Left ventricle myocardium superior (tissue), 1 donor: ENCODE measurements at regions of chr16 and their contacts with region 1.

Region 1: GRCh38 chr16:25014500-25015147 is 545 bp downstream of the ARHGAP17 start:
- DNase-seq: peak; percentile 66
- ATAC-seq: peak; percentile 51

Region 2: DNA sequence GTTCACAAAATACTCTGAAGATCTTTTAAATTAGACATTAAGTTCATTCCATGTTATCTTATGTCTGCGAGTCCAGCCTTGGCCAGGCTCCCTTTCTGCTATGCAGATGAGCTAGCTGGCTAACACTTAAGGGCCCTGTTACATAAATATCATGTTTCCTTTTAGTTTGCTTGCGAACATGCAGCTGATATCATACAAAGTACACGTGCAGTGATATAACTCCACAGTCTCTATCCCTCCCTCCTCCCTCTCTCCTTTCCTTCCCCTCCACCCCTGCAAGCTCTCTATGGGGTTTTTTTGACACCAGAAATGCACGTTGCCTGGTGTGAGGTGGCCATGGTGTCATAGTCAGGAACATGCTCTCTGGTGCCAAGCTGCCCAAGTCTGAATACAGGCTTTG is 45.6 kb before region 1 on chr16:
- intact Hi-C with region 1: loop called (anchors 10 kb)
- DNase-seq: peak; percentile 43
- ATAC-seq: peak; percentile 72